Breast epithelium (tissue), 4 donors: ENCODE measurements at regions of chr10 and their contacts with region 1.

Region 1: DNA sequence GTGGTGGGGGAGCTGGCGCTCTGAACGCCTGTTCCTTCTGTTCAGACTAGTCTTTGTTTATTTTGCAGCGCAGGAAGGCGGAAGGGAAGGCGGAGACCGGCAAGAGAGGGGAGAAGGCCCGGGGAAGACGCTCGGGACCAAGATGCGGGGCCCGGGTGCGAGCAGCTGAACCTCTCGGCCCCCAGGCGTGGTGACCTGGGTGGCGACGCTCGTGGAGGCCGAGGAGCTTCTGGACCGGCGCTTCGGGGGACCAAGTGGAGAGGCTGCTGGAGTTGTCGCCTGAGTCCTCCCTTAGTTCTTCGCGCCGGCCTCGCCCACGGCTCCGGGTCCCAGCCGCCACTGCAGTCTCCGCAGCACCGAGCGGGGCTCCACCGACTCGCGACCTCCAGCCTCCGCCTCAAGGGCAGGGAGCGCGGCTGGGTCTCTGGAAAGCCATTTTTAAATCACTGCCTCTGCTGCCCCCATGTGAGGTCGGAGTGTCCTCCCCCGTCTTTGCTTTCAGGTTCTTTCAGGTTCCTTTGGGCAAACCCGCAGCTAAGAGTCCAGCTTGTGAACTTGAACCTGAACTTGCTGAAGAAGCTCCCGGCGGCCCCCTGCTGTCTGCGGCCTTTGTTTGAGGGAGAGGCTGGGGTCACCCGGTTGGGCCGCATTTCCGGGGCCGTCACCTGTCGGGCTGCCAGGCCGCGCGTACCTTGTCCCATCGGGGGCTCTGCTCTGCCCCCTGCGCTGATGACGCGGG is 135.9 kb downstream of the KIF20B start:
- DNase-seq: peak; percentile 20 to 56
- H3K4me3 ChIP-seq: peak overlapping the region; percentile 48 to 72 (median 54)
- H3K27ac ChIP-seq: peak overlapping the region; percentile 22 to 55
- H3K4me1 ChIP-seq: no peaks in the 10 kb centered on the region
- H3K27me3 ChIP-seq: no peaks in the 10 kb centered on the region
- CTCF ChIP-seq: no peak
- POLR2A ChIP-seq: no peak

Region 2: GRCh38 chr10:89869180-89869579 is 31.9 kb after region 1 on chr10:
- intact Hi-C with region 1: loop called (anchors 2 kb)
- DNase-seq: no peak
- H3K4me3 ChIP-seq: no peak overlapping the region
- H3K27ac ChIP-seq: no peak overlapping the region
- H3K4me1 ChIP-seq: no peaks in the 10 kb centered on the region
- H3K27me3 ChIP-seq: no peaks in the 10 kb centered on the region
- CTCF ChIP-seq: no peak
- POLR2A ChIP-seq: no peak